ENCODE measurements at regions of chr1 and their contacts with region 1.

Region 1: GRCh38 chr1:23959041-23959460 is 577 bp upstream of the PNRC2 start:
- DNase-seq: peak; percentile 73 to 92
- ATAC-seq: peak; percentile 76 to 87 (median 80)
- H3K4me3 ChIP-seq: peak overlapping the region; percentile 55 to 93 (median 74)
- H3K27ac ChIP-seq: peak overlapping the region; percentile 93 to 100 (median 98)
- H3K4me1 ChIP-seq: peaks cover 0 to 59% (median 34%) of the 10 kb centered on the region in 9 donors
- H3K27me3 ChIP-seq: no peaks in the 10 kb centered on the region
- CTCF ChIP-seq: peak in 7 of 9 donors; percentile 1 to 75 (median 45)

Region 2: DNA sequence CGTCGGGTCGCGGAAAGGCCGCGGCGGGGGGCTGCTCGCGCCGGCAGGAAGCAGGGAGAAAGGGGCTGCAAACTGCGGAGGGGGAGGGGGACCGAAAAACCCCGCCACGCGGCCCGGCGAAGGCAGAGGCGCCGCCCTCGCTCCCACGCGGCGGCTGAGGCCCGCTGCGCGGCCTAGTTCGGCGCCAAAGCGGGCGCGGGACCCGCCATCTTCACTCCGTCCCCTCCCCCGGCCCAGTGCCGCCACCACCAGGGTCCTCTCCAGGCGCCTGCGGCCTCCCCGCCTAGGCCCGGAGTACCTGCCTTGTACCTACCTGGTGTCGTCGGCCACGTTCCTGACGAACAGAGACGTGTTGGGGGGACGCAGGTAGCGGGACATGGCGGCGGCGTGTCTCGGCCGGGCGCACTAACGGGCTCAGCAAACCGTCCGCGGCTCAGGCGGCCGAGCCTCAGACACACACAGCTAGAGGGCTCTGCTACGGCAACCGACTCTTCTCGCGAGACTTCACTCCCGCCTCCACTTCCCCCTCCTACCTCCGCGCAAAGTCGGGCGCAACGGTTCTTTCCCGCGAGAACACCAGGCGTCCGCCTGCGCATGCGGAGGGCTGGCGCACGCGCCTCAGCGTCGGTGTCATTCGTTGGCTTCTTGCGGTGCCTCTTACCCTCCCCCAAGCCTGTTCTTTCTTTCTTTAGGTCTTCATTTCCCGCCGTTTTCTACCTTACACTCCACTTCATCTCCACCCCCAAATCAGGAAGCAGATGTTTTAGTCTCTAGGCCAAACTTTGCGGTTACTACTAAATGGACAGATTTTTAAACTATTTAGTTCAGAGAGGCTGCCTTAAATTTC is 21.1 kb after region 1 on chr1 and contains the start of gene SRSF10:
- intact Hi-C with region 1: loop called in 1 of 10 experiments (anchors 2 kb)
- DNase-seq: peak; percentile 98
- ATAC-seq: peak; percentile 99 to 100 (median 99)
- H3K4me3 ChIP-seq: peak within 1 kb of the TSS; percentile 64 to 96 (median 86)
- H3K27ac ChIP-seq: peak within 1 kb of the TSS; percentile 63 to 99 (median 96)
- H3K4me1 ChIP-seq: peaks cover 4 to 57% (median 49%) of the 10 kb centered on the region in 9 donors
- H3K27me3 ChIP-seq: no peaks in the 10 kb centered on the region
- CTCF ChIP-seq: peak in 8 of 9 donors; percentile 18 to 81 (median 35)
- total RNA-seq, gene SRSF10: 40.7 to 65.8 (median 52.8) TPM

Region 3: DNA sequence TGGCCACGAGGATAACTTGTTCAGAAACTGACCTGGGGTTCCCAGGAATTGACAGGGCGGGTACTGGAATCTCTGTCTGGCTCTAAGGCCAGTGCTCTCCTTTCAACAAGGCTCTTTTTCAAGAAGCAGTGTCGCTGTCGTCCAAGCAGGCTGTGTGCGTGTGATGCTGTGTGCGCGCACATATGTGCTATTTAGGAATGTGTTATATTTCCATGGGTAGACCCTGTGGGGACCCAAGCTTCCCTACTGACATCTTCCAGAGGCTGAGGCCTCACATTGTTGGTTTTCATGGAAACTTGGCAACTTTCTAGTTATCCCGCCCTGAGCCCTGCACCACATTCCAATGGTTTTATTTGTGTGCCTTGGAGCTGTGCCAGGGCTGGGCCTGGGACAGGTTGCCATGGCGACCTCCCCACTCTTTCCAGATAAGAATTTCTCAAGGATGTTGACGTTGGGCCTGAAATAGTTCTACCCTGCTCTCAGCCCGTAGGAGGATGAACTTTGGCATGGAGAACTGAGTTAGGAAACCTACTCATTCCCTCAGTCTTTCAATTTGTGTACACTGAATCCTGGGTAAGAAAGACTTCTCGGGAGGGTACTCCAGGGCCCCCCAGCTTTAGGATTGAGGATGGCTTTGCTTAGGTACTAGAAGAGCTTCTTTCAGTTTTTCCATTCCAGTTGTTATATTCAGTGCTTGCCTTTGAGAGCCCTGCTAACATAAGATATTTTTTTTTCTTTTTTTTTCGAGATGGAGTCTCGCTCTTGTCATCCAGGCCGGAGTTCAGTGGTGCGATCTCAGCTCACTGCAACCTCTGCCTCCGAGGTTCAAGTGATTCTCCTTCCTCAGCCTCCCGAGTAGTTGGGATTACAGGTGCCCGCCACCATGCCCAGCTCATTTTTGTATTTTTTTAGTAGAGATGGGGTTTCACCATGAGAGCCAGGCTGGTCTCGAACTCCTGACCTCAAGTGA is 59.8 kb after region 1 on chr1:
- intact Hi-C with region 1: loop called in 6 of 10 experiments (anchors 2 to 10 kb)
- DNase-seq: peak; percentile 93 to 99
- ATAC-seq: peak; percentile 83 to 92 (median 89)
- H3K4me3 ChIP-seq: peak overlapping the region in 6 of 10 donors; percentile 5 to 11 (median 10)
- H3K27ac ChIP-seq: peak overlapping the region; percentile 74 to 97 (median 92)
- H3K4me1 ChIP-seq: peaks cover 52 to 85% (median 68%) of the 10 kb centered on the region in 9 donors
- H3K27me3 ChIP-seq: no peaks in the 10 kb centered on the region
- CTCF ChIP-seq: peak in 1 of 9 donors; percentile 11

Region 4: DNA sequence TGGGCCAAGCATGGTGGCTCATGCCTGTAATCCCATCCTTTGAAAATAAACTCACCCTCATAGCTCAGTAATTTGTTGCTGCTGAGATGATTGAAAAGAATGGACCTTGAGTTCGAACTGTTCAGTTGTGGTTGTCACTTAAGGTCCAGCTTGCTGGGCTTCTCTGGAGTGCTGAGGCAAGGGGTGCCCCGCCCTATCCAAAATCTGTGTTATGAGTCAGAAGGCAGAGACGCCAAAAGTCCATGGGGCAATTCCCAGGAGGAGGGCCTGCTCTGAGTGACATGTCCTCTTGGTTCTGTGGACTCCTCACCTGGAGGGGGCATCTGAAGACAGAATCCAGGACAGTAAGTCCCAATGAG is 88.0 kb after region 1 on chr1:
- intact Hi-C with region 1: no loop called
- DNase-seq: peak in 1 of 2 donors; percentile 31
- ATAC-seq: peak; percentile 58 to 79 (median 64)
- H3K4me3 ChIP-seq: no peak overlapping the region
- H3K27ac ChIP-seq: no peak overlapping the region
- H3K4me1 ChIP-seq: peaks cover 0 to 32% (median 17%) of the 10 kb centered on the region in 9 donors
- H3K27me3 ChIP-seq: no peaks in the 10 kb centered on the region
- CTCF ChIP-seq: no peak

Region 5: DNA sequence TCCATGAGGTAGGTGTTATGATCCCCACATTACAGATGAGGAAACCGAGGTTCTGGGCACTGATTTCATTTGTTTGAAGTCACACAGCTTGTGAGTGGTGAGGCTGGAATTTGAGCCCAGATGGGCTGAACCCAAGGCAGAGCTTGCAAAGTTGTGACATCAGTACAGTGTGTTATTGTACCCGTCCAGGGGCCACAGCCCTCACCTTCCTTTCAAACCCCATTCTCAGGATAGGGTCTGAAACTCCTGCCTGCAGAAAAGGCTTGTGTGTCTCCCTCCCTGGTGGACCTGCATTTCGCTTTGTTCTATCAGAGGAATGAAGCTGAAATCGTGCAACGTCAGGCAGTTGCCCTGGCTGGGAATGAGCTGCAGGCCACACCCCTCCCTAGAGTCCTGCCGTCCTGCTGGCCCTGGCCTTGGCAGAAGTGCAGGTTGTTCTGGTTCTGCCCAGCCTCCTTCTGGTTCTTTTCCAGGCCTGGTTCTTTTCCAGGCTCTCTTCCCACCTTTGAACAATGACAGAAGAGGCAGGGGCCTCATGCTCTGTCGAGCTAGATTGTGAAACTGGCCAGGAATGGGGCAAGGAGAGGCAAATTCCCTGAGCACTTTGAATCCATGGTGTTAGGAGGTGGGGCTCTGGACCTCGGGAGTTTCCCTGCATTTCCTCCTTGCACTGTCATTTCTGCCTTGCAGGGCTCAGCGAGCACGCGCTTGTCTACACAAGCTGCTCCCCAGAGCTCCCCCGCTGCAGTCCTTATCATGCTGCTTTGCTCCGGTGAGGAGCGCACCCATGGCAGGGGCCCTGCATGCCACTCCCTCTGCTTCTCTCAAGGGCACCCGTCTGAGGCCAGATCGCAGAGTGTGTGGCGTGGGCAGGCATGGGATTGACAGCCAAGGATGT is 161.1 kb after region 1 on chr1:
- intact Hi-C with region 1: loop called in 1 of 10 experiments (anchors 10 kb)
- DNase-seq: peak; percentile 56 to 60
- ATAC-seq: peak; percentile 74 to 89 (median 81)
- H3K4me3 ChIP-seq: peak overlapping the region in 2 of 10 donors; percentile 10 to 13
- H3K27ac ChIP-seq: peak overlapping the region in 9 of 10 donors; percentile 29 to 82 (median 72)
- H3K4me1 ChIP-seq: peaks cover 0 to 18% (median 16%) of the 10 kb centered on the region in 9 donors
- H3K27me3 ChIP-seq: peaks cover 0 to 9% (median 0%) of the 10 kb centered on the region in 7 donors
- CTCF ChIP-seq: no peak